SK-N-SH (cell line): ENCODE measurements at regions of chr14 and their contacts with region 1.

Region 1: GRCh38 chr14:24310646-24311604 is at the start of gene LTB4R:
- DNase-seq: no peak
- H3K4me3 ChIP-seq: no peak within 1 kb of the TSS
- H3K27ac ChIP-seq: no peak within 1 kb of the TSS
- H3K4me1 ChIP-seq: peaks cover 0 to 2% of the 10 kb centered on the region in 2 experiments; a peak in 1 of 4 replicates
- H3K27me3 ChIP-seq: no peaks in the 10 kb centered on the region
- CTCF ChIP-seq: no peak
- EP300 ChIP-seq: no peak
- RAD21 ChIP-seq: no peak
- polyA plus RNA-seq, gene LTB4R: 11.9 and 14.0 TPM in 2 replicates

Region 2: DNA sequence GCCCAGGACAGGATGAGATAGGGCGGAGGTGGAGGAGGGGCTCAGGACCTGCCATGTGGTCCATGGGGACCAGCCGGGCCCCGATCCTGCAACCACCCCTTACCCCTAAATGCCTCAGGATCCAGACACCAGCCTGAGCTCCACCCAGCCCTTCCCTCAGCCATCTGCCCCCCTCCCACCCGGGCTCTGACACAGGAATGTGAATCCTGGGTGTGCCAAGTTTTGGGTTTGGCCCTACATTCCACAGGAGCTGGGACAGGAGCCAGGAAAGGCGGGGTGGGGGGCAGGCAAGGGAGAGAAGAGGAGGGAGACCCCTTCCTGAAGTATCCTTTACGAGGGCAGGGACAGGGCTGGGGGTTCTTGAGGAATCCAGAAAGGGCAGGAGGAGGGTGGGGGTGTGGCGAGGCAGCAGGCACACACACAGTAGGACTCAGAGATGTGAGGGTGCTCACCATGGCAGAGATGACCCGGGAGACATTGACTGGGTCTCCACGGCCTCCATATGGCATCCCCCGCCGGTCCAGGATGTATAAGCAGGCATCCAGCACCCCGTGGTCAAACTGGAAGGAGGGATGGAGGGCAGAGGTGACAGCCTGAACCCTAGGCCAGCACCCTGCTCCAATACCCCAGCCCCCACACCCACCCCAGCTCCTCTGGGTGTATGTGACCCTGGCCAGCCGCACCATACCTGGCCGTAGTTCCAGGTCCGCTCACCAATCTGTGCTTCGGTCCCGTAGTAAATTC is 51.5 kb before region 1 on chr14:
- CTCF ChIA-PET with region 1: interaction called, 13 read pairs
- POLR2A ChIA-PET with region 1: no interaction called
- DNase-seq: no peak
- H3K4me3 ChIP-seq: no peak overlapping the region
- H3K27ac ChIP-seq: no peak overlapping the region
- H3K4me1 ChIP-seq: peaks cover 0 to 3% of the 10 kb centered on the region in 2 experiments; a peak in 1 of 4 replicates
- H3K27me3 ChIP-seq: no peaks in the 10 kb centered on the region
- CTCF ChIP-seq: no peak
- EP300 ChIP-seq: no peak
- RAD21 ChIP-seq: no peak

Region 3: DNA sequence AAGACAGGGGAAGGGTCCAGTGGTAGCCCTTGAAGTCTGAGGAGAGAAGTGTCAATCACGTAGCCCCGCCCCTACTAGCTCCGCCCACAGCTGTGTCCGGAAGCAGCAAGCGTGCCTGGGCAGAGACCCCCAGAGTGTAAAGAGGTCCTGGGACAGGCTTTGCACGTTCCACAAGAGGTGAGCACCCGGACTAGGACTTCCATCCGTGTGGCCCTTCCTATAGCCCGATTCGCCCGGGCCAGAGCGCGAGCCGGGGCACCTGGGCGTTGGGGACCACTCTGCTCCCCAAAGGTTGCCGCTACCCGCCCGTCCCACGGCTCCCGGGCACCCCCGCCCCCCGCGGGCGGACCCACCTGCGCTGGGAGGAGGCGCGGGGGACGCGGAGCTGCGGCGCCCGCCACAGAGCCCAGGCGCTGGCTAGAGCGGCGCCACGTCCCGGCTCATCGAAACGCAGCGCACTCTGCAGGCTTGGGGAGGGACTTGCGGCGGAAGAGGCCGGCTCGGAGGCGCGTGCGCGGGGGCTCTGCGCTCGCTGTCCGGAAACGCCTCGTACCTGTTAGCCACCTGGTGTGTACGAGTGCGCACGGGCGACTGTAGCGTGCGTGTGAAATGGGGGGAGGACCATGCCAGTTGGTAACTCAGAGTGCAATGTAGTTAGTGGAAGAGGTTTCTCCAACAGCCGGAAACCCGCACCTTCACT is 39.6 kb before region 1 on chr14 and contains the start of gene RABGGTA:
- CTCF ChIA-PET with region 1: interaction called, 13 read pairs
- POLR2A ChIA-PET with region 1: no interaction called
- DNase-seq: peak; percentile 97
- H3K4me3 ChIP-seq: peak within 1 kb of the TSS; percentile 82 to 83
- H3K27ac ChIP-seq: peak within 1 kb of the TSS; percentile 87 to 95
- H3K4me1 ChIP-seq: peaks cover 6 to 10% of the 10 kb centered on the region in 2 experiments; a peak in 2 of 4 replicates
- H3K27me3 ChIP-seq: no peaks in the 10 kb centered on the region
- CTCF ChIP-seq: peak; percentile 68
- EP300 ChIP-seq: peak in 1 of 2 experiments; percentile 62; a peak in 2 of 4 replicates
- RAD21 ChIP-seq: no peak
- polyA plus RNA-seq, gene RABGGTA: 54.9 and 59.4 TPM in 2 replicates

Region 4: GRCh38 chr14:24279301-24280186 is 31.4 kb before region 1 on chr14:
- CTCF ChIA-PET with region 1: interaction called, 48 read pairs
- POLR2A ChIA-PET with region 1: no interaction called
- DNase-seq: peak; percentile 67
- H3K4me3 ChIP-seq: no peak overlapping the region
- H3K27ac ChIP-seq: no peak overlapping the region
- H3K4me1 ChIP-seq: peaks cover 0 to 10% of the 10 kb centered on the region in 2 experiments; a peak in 1 of 4 replicates
- H3K27me3 ChIP-seq: no peaks in the 10 kb centered on the region
- CTCF ChIP-seq: peak; percentile 47
- EP300 ChIP-seq: no peak; a peak in 1 of 4 replicates
- RAD21 ChIP-seq: peak; percentile 60

Region 5: GRCh38 chr14:24289649-24290249 is 21.2 kb before region 1 on chr14:
- CTCF ChIA-PET with region 1: interaction called, 48 read pairs
- POLR2A ChIA-PET with region 1: no interaction called
- DNase-seq: no peak
- H3K4me3 ChIP-seq: no peak overlapping the region
- H3K27ac ChIP-seq: no peak overlapping the region
- H3K4me1 ChIP-seq: no peaks in the 10 kb centered on the region
- H3K27me3 ChIP-seq: no peaks in the 10 kb centered on the region
- CTCF ChIP-seq: no peak
- EP300 ChIP-seq: no peak
- RAD21 ChIP-seq: no peak